ENCODE measurements at regions of chr19 and their contacts with region 1.

Region 1: DNA sequence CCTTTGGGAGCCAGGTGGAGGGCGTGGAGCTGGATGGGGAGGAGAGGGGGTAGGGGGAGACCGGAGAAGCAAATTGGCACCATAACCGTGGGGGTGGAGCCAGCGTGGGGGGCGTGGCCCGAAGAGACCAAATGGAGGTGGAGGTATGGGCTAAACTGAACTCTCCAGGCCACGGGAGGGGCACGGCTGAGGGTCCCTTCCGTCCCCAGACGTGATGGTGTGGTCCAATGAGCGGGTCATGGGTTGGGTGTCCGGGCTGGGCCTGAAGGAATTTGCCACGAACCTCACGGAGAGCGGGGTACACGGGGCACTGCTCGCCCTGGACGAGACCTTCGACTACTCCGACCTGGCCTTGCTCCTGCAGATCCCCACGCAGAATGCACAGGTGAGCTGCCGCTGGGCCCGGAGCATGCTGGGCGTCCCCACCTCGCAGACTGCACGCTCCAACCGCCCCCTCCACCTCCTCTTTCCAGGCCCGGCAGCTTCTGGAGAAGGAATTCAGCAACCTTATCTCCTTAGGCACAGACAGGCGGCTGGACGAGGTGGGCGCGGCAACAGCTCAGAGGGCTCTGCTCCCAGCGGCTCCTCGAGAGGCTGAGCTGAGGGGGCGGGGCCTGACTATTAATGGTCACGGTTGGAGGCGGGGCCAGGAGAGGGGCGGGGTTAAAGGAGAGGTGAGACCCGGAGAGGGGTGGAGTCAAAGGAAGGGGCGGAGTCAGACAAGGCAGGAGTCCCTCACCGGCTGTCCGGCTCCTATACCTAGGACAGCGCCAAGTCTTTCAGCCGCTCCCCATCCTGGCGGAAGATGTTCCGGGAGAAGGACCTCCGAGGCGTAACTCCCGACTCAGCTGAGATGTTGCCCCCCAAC is 6.2 kb downstream of the HRC start:
- DNase-seq: peak; percentile 99 to 100
- ATAC-seq: peak; percentile 63

Region 2: DNA sequence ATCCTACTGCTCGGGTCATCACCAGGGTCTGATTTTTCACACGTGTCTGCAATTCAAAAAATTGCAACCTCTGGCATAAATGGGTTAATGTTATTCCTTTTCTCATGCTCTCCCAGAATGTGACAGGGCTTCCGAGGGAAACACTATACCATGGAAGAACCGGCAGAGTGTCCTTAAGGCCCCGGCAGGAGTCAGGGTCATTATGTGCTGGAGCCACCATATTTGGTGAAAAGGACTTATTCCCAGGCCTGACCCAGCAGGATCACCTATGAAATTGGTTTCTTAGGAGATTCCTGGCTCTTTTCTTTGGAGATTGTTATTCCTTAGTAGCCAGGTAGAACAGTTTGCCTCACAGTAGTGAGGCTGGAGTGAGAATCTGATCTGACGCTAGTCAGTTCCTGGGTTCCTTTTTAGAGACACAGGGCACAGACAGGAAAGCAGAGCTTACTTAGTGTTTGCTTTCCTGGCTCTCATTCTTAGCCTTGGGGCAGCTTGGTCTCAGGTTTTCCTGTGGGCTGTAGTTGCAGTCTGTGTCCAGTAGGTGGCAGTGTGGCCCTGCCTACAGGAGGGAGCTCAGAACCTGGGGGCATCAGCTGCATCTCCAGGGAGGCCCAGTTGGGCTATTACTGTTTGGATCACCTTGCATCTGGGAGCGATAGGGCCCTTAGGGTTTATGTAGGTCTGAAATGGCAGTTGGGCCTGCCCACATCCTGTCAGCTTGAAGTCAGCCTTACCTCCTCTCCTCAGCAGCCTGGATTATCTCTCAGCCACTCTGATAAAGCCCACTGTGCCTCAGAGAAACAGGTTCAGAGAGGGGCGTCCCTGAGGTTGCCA is 51.3 kb before region 1 on chr19:
- intact Hi-C with region 1: loop called in 1 of 2 experiments (anchors 5 kb)
- DNase-seq: peak in 1 of 2 donors; percentile 67
- ATAC-seq: peak; percentile 79

Region 3: GRCh38 chr19:49614096-49614833 is 465.2 kb after region 1 on chr19:
- intact Hi-C with region 1: no loop called
- DNase-seq: no peak
- ATAC-seq: peak; percentile 53